ENCODE measurements at regions of chr7 and their contacts with region 1.

Region 1: DNA sequence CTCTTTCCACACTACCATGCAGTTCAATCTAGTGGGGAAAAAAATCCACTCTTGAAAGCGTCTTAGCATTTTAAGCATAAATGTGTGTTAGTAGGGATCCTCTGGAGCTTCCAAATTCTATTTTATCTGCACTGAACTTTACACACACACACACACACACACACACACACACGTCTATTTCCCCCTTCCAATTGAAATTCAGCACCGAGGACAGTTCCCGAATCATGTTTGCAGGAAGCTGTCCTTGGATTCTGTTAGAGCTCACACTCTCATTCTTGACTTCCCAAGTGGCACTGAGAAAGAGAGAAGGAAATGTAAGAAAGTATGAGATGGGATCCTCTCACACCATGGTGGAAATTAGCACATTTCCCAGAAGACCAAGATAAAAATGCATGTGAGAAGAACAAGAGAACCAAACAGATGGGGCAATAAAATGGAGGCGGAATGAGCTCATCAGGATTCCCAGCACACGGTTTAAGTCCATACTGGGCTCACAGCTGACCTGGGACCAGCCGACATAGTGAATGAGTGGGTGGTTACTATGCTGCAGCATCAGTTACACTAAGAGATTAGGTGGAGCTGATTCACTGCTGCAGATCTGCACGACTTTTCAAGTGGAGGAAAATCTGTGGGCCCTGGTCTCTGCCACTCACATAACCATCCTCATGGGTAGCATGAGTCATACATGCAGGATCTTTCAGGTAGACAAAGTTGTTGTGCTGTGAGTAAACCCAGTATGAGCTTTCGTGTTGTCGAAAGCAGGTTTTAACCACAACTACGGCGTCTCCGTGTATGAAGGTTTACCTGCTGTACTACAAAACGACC is 3.3 kb upstream of the NPTX2 start:
- DNase-seq: no peak
- H3K4me3 ChIP-seq: no peak overlapping the region
- H3K27ac ChIP-seq: no peak overlapping the region
- H3K4me1 ChIP-seq: peaks cover 3% of the 10 kb centered on the region
- H3K27me3 ChIP-seq: no peaks in the 10 kb centered on the region
- CTCF ChIP-seq: no peak
- EP300 ChIP-seq: no peak
- POLR2A ChIP-seq: no peak

Region 2: GRCh38 chr7:98559958-98560357 is 53.9 kb before region 1 on chr7:
- intact Hi-C with region 1: loop called in 1 of 4 experiments (anchors 5 kb)
- DNase-seq: no peak
- H3K4me3 ChIP-seq: no peak overlapping the region
- H3K27ac ChIP-seq: no peak overlapping the region
- H3K4me1 ChIP-seq: no peaks in the 10 kb centered on the region
- H3K27me3 ChIP-seq: no peaks in the 10 kb centered on the region
- CTCF ChIP-seq: no peak
- EP300 ChIP-seq: no peak
- POLR2A ChIP-seq: no peak

Measured in ovary (tissue), 10 donors.